A549 (cell line): ENCODE measurements at regions of chr11 and their contacts with region 1.

Region 1: GRCh38 chr11:129375751-129376657 is at the start of gene BARX2:
- DNase-seq: peak in 1 of 2 experiments; percentile 59
- ATAC-seq: peak; percentile 78 to 81
- H3K4me3 ChIP-seq: peak within 1 kb of the TSS; percentile 42
- H3K27ac ChIP-seq: no peak within 1 kb of the TSS
- H3K4me1 ChIP-seq: peaks cover 18% of the 10 kb centered on the region; the same call in 2 of the 3 replicates
- CTCF ChIP-seq: peak; percentile 57
- EP300 ChIP-seq: no peak
- POLR2A ChIP-seq: no peak
- RAD21 ChIP-seq: peak; percentile 54; a peak in 4 of 5 replicates
- polyA plus RNA-seq, gene BARX2: not detected in 2 replicates

Region 2: DNA sequence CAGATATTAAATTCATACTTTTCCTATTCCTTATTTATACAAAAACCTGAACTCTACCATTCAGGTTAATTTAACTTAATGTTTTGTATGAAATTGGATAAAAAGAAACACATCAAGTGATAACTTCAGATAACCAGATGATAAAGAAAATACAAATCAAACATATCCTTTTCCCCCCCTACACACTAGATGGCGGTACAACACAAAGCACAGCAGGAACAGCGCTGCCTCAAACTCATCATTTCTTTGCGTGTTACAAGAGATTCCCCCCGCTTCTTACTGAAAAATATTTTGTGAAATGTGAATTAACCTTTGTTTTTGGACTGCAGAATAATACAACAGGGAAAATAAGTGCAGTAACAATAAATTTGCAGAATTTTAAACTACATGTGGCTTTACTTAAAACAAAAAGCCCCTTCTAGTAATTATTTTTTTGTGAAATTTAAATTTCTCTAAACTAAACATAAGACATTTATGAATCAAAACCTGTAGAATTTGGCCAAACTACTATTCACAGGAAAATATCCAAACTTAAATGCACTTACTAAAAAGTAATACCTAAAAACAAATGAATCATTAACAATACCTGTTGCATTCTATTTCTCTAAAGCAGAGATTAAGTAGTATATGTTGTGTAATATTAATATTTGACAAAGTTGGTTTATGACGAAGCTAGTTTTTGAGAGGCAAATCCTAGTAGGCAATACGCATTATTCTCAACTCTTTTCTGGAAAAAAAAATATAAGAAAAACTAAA is 258.2 kb before region 1 on chr11:
- CTCF ChIA-PET with region 1: no interaction called
- POLR2A ChIA-PET with region 1: no interaction called
- DNase-seq: peak; percentile 15 to 74
- ATAC-seq: peak in 1 of 2 experiments; percentile 57; a peak in 2 of 6 replicates
- H3K4me3 ChIP-seq: no peak overlapping the region
- H3K27ac ChIP-seq: no peak overlapping the region
- H3K4me1 ChIP-seq: peaks cover 47% of the 10 kb centered on the region
- CTCF ChIP-seq: peak; percentile 93
- EP300 ChIP-seq: no peak
- POLR2A ChIP-seq: no peak
- RAD21 ChIP-seq: peak; percentile 95 to 98

Region 3: GRCh38 chr11:129386795-129387397 is 10.9 kb after region 1 on chr11:
- CTCF ChIA-PET with region 1: interaction called, 11 read pairs
- POLR2A ChIA-PET with region 1: no interaction called
- DNase-seq: no peak
- ATAC-seq: no peak
- H3K4me3 ChIP-seq: no peak overlapping the region
- H3K27ac ChIP-seq: no peak overlapping the region
- H3K4me1 ChIP-seq: no peaks in the 10 kb centered on the region
- CTCF ChIP-seq: no peak
- EP300 ChIP-seq: no peak
- POLR2A ChIP-seq: no peak
- RAD21 ChIP-seq: no peak

Region 4: DNA sequence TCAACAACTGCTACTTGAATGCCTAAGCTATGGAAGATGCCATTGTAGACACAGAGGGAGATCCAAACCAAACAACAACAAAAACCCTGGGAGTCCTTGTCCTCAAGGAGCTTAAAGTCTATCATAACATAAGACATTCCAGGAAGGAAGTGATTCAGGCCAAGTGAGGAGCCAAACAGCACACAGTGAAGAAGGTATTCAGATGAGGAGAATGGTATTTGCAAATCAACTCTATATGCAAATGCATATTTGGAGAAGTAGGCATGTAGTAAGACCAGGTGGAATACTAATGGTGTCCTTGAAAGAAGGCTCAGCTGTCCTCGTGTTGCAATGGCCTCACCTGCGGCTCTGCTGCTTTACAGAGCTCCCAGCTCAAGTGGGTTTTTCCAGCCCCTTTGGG is 26.8 kb after region 1 on chr11:
- CTCF ChIA-PET with region 1: interaction called, 10 read pairs
- POLR2A ChIA-PET with region 1: no interaction called
- DNase-seq: no peak
- ATAC-seq: no peak
- H3K4me3 ChIP-seq: no peak overlapping the region
- H3K27ac ChIP-seq: no peak overlapping the region
- H3K4me1 ChIP-seq: no peaks in the 10 kb centered on the region
- CTCF ChIP-seq: no peak
- EP300 ChIP-seq: no peak
- POLR2A ChIP-seq: no peak
- RAD21 ChIP-seq: no peak

Region 5: GRCh38 chr11:129698212-129698611 is 322.2 kb after region 1 on chr11:
- CTCF ChIA-PET with region 1: interaction called, 11 read pairs
- POLR2A ChIA-PET with region 1: no interaction called
- DNase-seq: no peak
- ATAC-seq: no peak
- H3K4me3 ChIP-seq: no peak overlapping the region
- H3K27ac ChIP-seq: no peak overlapping the region
- H3K4me1 ChIP-seq: 0 out of 3 replicates have a peak, but pooled peaks cover 3% of the 10 kb centered on the region
- CTCF ChIP-seq: no peak
- EP300 ChIP-seq: no peak
- POLR2A ChIP-seq: no peak
- RAD21 ChIP-seq: no peak

Region 6: DNA sequence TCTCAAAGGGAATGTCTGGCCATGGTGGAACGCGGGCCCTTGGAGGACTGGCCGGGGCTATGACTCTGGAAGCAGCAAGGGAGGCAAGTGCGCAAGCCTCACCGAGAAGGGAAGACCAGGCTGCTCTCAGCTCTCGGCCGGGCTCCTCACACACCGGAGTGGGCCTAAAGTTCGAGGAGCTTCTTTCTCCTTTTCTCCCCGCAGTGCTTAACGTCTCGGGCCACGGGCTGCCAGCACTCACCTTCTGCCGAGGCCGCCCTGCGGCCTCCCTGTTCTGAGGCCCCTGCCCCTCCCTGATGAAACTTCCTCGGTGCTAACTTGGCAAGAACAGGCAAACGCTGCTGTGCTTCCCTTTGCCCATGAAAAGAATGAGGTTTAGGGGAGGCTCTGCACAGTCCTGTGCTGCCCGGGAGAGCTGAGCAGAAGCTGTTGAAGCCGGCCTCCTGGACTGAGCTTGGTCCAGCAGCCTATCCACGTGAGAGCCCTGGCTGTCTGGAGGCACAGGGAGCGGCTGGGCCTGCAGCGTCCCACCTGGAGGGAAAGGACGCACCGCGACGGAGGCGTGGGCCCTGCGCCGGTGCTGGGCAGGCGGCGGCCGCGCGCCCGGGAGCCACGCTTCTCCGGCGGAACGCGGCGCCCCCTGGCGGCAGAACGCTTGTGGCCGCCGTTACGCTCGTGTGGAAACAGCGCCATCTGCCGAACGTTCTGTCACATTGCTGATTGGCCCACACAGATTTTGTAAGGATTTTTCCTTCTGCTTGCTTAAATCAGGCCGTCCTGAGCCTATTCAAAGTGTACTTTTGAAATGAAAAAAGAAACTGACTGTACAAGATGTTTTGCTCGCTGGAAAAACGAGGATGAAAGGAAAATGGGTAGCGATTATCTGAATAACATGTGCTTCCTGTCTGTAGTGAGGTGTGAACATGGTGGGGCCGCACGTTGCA is 374.6 kb after region 1 on chr11:
- CTCF ChIA-PET with region 1: interaction called, 45 read pairs
- POLR2A ChIA-PET with region 1: no interaction called
- DNase-seq: peak; percentile 12 to 79
- ATAC-seq: peak; percentile 95 to 98
- H3K4me3 ChIP-seq: peak overlapping the region; percentile 27; the same call in 1 of the 3 replicates
- H3K27ac ChIP-seq: peak overlapping the region; percentile 17 to 68; a peak in 2 of 6 replicates
- H3K4me1 ChIP-seq: no peaks in the 10 kb centered on the region
- CTCF ChIP-seq: peak; percentile 100
- EP300 ChIP-seq: no peak
- POLR2A ChIP-seq: no peak
- RAD21 ChIP-seq: peak; percentile 94 to 96

Region 7: DNA sequence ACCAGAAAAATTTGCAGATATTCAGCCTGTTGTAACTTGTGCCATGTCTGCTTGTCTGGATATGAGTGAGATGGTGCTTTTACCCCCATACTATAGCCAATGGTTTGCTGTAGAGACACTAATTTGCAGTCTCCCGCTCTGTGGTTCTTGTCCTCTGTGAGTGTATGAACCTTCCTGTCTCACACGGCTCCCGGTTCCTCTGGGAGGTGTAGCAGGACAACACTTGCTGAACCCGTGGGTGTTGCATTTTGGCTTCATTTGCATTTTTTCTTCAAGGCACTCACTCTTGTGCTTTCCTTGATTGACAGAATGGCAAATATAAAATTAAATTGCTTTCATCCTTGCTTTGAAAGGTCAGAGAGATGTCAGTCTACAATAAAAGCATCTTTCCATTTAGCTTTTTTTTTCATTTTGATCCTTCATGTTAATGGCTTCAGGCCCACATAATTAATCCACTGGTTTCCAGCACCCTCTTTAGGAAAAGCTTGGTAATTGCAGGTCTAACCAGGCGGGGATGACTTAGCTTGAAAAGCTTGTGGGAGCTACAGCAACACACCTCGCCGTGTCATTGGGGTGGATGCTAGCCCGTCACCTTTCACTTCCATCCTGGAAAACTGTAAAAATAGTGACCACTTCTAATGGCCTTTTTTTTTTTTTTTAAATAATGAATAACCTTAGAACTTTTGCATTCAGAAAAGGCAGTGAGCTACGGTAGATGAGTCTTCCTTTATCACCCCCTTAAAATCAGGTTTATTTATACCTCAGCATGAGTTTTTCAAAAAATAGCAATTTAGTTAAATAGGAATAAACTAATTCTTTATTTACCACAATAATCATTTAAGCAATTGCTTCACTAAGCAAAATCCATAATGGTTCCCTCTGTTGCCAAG is 756.2 kb after region 1 on chr11:
- CTCF ChIA-PET with region 1: no interaction called
- POLR2A ChIA-PET with region 1: no interaction called
- DNase-seq: peak; percentile 61 to 71
- ATAC-seq: peak; percentile 73 to 87; a peak in 4 of 6 replicates
- H3K4me3 ChIP-seq: no peak overlapping the region
- H3K27ac ChIP-seq: no peak overlapping the region
- H3K4me1 ChIP-seq: no peaks in the 10 kb centered on the region
- CTCF ChIP-seq: peak; percentile 66
- EP300 ChIP-seq: no peak
- POLR2A ChIP-seq: no peak
- RAD21 ChIP-seq: peak; percentile 82 to 84